ENCODE measurements at regions of chr20 and their contacts with region 1.

Region 1: GRCh38 chr20:278607-279571 is 11.7 kb downstream of the C20orf96 start:
- DNase-seq: no peak
- H3K4me3 ChIP-seq: no peak overlapping the region
- H3K27ac ChIP-seq: no peak overlapping the region
- H3K4me1 ChIP-seq: no peaks in the 10 kb centered on the region
- H3K27me3 ChIP-seq: no peaks in the 10 kb centered on the region
- CTCF ChIP-seq: no peak

Region 2: GRCh38 chr20:219290-220115 is 59.4 kb before region 1 on chr20:
- intact Hi-C with region 1: loop called (anchors 10 kb)
- DNase-seq: no peak
- H3K4me3 ChIP-seq: no peak overlapping the region
- H3K27ac ChIP-seq: no peak overlapping the region
- H3K4me1 ChIP-seq: no peaks in the 10 kb centered on the region
- H3K27me3 ChIP-seq: no peaks in the 10 kb centered on the region
- CTCF ChIP-seq: no peak

Region 3: GRCh38 chr20:324177-325044 is 45.5 kb after region 1 on chr20:
- intact Hi-C with region 1: loop called (anchors 10 kb)
- DNase-seq: peak; percentile 97
- H3K4me3 ChIP-seq: peak overlapping the region; percentile 59
- H3K27ac ChIP-seq: peak overlapping the region; percentile 89
- H3K4me1 ChIP-seq: no peaks in the 10 kb centered on the region
- H3K27me3 ChIP-seq: no peaks in the 10 kb centered on the region
- CTCF ChIP-seq: no peak

Measured in colonic mucosa (tissue), 4 donors.